ENCODE measurements at regions of chr18 and their contacts with region 1.

Region 1: GRCh38 chr18:23994361-23994902 is 20.1 kb upstream of the TTC39C start:
- DNase-seq: peak; percentile 97
- ATAC-seq: peak; percentile 61
- H3K4me3 ChIP-seq: peak overlapping the region; percentile 28; the same call in 1 of the 2 replicates
- H3K27ac ChIP-seq: peak overlapping the region; percentile 87
- H3K4me1 ChIP-seq: peaks cover 70% of the 10 kb centered on the region
- H3K27me3 ChIP-seq: no peaks in the 10 kb centered on the region
- CTCF ChIP-seq: no peak

Region 2: DNA sequence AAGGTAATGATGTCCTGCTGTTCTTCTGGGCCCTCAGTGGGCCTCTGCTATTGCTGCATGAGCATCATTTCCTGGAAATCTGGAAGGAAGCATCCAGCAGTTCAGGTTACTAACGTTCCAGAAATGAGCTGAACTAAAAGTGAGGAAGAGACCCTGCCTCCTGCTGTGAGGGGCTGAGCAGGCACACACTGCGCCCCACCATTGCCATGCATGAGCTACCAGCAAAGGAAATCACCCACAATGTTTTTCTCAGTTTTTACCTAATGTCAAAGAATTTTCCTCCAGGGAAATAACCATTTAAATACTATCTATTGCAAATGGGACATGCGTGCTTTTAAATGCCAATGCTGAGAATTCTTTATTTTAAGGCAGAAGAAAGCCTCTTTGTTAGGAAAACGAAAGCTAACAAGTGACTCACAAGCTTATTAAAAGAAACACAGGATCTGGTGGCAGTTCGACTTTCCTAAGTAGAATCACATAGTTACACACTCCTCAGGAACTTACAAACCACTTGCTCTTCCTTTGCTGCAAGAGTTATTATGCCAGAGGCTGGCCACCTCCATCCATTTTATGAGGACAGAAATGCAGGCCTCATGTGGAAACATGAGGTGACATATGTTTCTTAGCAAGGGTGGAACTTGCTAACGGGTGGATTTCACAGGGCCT is 132.5 kb before region 1 on chr18:
- CTCF ChIA-PET with region 1: no interaction called
- POLR2A ChIA-PET with region 1: no interaction called
- intact Hi-C with region 1: loop called (anchors 10 kb)
- DNase-seq: peak; percentile 88
- ATAC-seq: peak; percentile 88
- H3K4me3 ChIP-seq: no peak overlapping the region
- H3K27ac ChIP-seq: peak overlapping the region; percentile 99
- H3K4me1 ChIP-seq: peaks cover 53% of the 10 kb centered on the region
- H3K27me3 ChIP-seq: no peaks in the 10 kb centered on the region
- CTCF ChIP-seq: no peak

Region 3: GRCh38 chr18:23958036-23958435 is 36.4 kb before region 1 on chr18:
- CTCF ChIA-PET with region 1: interaction called, 7 read pairs
- POLR2A ChIA-PET with region 1: interaction called, 4 read pairs
- intact Hi-C with region 1: loop called (anchors 5 kb)
- DNase-seq: no peak
- ATAC-seq: no peak
- H3K4me3 ChIP-seq: no peak overlapping the region
- H3K27ac ChIP-seq: no peak overlapping the region
- H3K4me1 ChIP-seq: no peaks in the 10 kb centered on the region
- H3K27me3 ChIP-seq: no peaks in the 10 kb centered on the region
- CTCF ChIP-seq: no peak

Region 4: DNA sequence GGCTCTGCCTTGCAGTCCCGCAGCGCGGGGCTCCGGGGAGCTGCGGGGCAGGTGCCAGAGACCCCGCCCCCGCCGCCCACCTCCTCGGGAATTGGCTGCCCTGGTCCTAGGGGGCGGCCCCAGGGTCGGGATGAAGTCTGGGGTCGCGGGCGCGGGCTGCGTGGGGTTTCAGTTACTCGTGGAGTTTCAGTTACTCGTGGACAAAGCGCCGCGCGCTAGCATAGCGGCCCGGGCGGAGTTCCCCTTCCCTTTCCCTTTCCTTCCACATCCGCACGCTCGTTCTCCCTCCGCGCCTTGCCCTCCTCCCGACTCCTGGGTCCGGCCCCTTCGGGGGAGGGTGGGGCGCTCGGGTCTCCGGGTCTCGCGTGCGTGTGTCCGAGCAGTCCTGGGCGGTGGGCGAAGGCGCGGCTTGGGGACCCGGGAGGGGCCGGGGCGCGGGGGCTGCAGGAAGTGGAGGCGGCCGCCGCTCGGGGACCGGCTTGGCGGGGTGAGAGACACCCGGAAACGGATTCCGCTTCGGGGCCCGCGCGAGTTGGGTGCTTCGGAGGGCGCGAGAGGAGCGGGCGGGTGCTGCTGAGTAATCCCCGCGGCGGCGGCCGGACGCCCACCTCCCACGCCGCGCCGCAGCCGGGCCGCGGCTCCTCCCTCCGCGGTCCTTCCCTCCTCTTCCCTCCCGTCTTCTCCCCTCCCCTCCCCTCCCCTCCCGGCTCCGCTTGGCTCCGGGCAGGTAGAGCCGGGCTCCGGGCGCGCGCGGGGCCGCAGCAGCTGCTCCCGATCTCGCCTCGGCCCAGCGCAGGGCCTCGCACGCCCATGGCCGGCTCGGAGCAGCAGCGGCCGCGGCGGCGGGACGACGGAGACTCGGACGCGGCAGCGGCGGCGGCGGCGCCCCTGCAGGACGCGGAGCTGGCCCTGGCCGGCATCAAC is 19.9 kb after region 1 on chr18 and contains the start of gene TTC39C:
- CTCF ChIA-PET with region 1: no interaction called
- POLR2A ChIA-PET with region 1: no interaction called
- intact Hi-C with region 1: loop called (anchors 2 kb)
- DNase-seq: peak; percentile 70
- ATAC-seq: peak; percentile 66
- H3K4me3 ChIP-seq: peak within 1 kb of the TSS; percentile 91
- H3K27ac ChIP-seq: peak within 1 kb of the TSS; percentile 26
- H3K4me1 ChIP-seq: peaks cover 14% of the 10 kb centered on the region
- H3K27me3 ChIP-seq: no peaks in the 10 kb centered on the region
- CTCF ChIP-seq: no peak
- total RNA-seq, gene TTC39C: 24.7 and 26.3 TPM in 2 replicates